Uterus (tissue), 4 donors: ENCODE measurements at regions of chr20 and their contacts with region 1.

Region 1: GRCh38 chr20:41232973-41233926 is 84.3 kb downstream of the ZHX3 start:
- DNase-seq: no peak
- H3K4me3 ChIP-seq: no peak overlapping the region
- H3K27ac ChIP-seq: peak overlapping the region; percentile 79 to 84
- H3K4me1 ChIP-seq: peaks cover 7 to 8% of the 10 kb centered on the region in 2 donors
- H3K27me3 ChIP-seq: no peaks in the 10 kb centered on the region
- CTCF ChIP-seq: no peak
- POLR2A ChIP-seq: no peak

Region 2: GRCh38 chr20:41173161-41173721 is 60.0 kb before region 1 on chr20:
- intact Hi-C with region 1: loop called (anchors 5 kb)
- DNase-seq: peak; percentile 91 to 92
- H3K4me3 ChIP-seq: no peak overlapping the region
- H3K27ac ChIP-seq: peak overlapping the region; percentile 71 to 85
- H3K4me1 ChIP-seq: peaks cover 0 to 11% of the 10 kb centered on the region in 2 donors
- H3K27me3 ChIP-seq: no peaks in the 10 kb centered on the region
- CTCF ChIP-seq: peak; percentile 98 to 99 (median 98)
- POLR2A ChIP-seq: no peak